ENCODE measurements at regions of chr5 and their contacts with region 1.

Region 1: GRCh38 chr5:138449501-138450239 is 10.8 kb downstream of the REEP2 start:
- DNase-seq: peak; percentile 89 to 91
- H3K4me3 ChIP-seq: no peak overlapping the region
- H3K27ac ChIP-seq: no peak overlapping the region
- H3K4me1 ChIP-seq: peaks cover 0 to 10% of the 10 kb centered on the region in 2 donors
- H3K27me3 ChIP-seq: no peaks in the 10 kb centered on the region
- CTCF ChIP-seq: peak; percentile 70 to 97 (median 95)
- POLR2A ChIP-seq: no peak

Region 2: GRCh38 chr5:138491669-138492559 is 42.2 kb after region 1 on chr5:
- intact Hi-C with region 1: no loop called
- DNase-seq: peak; percentile 93 to 94
- H3K4me3 ChIP-seq: peak overlapping the region in 2 of 3 donors; percentile 46 to 49
- H3K27ac ChIP-seq: peak overlapping the region in 1 of 3 donors; percentile 24
- H3K4me1 ChIP-seq: peaks cover 9 to 20% of the 10 kb centered on the region in 2 donors
- H3K27me3 ChIP-seq: no peaks in the 10 kb centered on the region
- CTCF ChIP-seq: no peak
- POLR2A ChIP-seq: peak in 1 of 2 donors; percentile 31

Region 3: DNA sequence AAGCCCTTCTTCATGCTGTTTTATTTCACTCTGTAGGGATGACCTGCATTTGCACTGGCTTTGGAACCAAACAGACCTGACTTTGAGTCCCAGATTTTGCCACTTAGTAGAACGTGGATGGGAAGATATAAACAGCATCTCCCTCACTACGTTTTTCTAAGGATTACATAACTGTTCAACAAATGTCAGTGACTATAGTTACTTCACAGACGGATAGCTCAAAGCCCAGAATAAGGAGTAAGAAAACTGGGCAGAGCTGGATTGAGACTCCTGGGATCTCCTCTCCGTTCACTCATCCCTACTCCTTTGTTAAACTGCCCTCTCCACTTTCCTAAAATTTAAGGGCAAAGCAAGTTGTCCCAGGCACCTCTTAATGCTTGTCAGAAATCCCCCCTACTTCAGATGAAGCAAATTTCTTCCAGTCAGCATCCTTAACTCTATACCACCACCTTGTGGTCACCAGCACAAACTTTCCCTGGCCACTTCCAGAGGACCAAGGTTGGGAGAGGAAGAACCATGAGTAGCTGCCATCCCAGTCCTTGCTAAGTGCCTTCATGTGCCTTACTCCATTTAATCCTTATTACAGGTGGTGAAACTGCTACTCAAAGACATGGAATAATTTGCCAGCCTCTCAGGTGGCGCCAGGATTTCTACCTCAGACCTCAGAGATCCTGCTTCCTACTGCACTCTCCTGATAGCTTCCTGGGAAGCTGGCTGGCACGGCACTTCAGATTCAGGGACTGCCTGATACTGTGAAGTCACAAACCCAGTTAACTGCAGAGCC is 54.0 kb after region 1 on chr5:
- intact Hi-C with region 1: loop called (anchors 2 kb)
- DNase-seq: peak; percentile 39 to 41
- H3K4me3 ChIP-seq: no peak overlapping the region
- H3K27ac ChIP-seq: peak overlapping the region; percentile 44 to 52 (median 49)
- H3K4me1 ChIP-seq: peaks cover 26 to 39% of the 10 kb centered on the region in 2 donors
- H3K27me3 ChIP-seq: no peaks in the 10 kb centered on the region
- CTCF ChIP-seq: peak; percentile 50 to 90 (median 76)
- POLR2A ChIP-seq: no peak

Region 4: DNA sequence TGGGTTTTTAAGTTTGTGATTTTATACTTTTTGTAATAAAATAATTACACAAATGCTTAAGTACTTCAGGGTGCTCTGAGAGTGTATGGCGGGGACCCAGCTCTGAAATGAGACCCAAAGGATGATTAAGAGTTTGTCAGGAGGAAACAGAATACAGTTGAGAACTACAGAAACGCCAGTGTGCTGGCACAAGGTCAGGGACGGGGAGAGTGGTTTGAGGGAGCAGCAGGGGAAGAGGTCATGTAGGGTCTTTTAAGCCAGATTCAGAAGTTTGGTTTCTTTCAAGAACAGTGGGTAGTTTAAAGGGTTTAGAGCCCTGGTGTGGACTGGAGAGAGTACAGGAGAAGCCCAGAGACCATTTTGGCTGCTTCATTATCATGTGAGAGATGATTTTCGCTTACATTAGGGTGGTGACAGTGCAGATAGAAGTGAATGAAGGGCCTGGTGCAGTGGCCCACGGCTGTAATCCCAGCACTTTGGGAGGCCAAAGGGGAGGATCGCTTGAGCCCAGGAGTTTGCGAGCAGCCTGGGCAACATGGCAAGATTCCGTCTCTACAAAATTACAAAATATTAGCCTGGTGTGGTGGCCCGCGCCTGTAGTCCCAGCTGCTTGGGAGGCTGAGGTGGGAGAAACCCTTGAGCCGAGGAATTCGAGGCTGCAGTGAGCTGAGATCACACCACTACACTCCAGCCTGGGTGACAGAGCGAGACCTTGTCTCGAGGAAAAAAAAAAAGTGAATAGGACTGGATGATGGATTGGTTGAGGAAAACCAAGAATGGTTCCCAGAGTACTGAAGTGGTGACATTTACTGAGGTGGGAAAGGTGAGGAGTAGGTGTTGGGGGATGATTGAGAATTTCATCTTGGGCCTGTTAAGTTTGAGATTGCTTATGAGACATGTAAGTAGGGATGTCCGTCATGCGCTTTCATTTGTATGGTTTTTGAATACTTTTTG is 94.8 kb after region 1 on chr5:
- intact Hi-C with region 1: loop called (anchors 5 kb)
- DNase-seq: peak; percentile 12 to 16
- H3K4me3 ChIP-seq: peak overlapping the region in 2 of 3 donors; percentile 45 to 74
- H3K27ac ChIP-seq: peak overlapping the region; percentile 84 to 99 (median 98)
- H3K4me1 ChIP-seq: peaks cover 34 to 43% of the 10 kb centered on the region in 2 donors
- H3K27me3 ChIP-seq: no peaks in the 10 kb centered on the region
- CTCF ChIP-seq: no peak
- POLR2A ChIP-seq: no peak